ENCODE measurements at regions of chr10 and their contacts with region 1.

Region 1: GRCh38 chr10:13707156-13707881 is 120.6 kb downstream of the PRPF18 start:
- DNase-seq: peak; percentile 51 to 63
- H3K4me3 ChIP-seq: peak overlapping the region; percentile 59
- H3K27ac ChIP-seq: peak overlapping the region; percentile 67
- H3K4me1 ChIP-seq: peaks cover 38% of the 10 kb centered on the region
- H3K27me3 ChIP-seq: no peaks in the 10 kb centered on the region
- CTCF ChIP-seq: no peak

Region 2: DNA sequence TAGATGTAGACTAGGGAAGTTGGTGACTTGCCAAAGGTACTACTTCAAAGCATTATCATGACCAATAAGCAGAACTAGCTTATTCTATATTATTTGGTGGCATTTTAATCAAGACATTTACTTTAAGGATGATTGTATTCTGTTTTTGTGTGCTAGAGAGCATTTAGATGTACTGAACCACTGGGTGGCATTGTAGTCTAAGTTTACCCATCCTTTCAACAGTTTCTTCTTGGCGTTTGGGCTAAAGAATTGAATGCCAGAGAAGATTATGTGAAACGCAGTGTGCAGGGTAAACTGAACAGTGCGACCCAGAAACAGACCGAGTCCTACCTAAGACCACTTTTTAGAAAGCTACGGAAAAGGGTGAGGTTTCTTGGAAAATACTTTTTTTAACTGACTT is 93.8 kb before region 1 on chr10:
- CTCF ChIA-PET with region 1: no interaction called
- POLR2A ChIA-PET with region 1: no interaction called
- intact Hi-C with region 1: loop called (anchors 10 kb)
- DNase-seq: no peak
- H3K4me3 ChIP-seq: no peak overlapping the region
- H3K27ac ChIP-seq: no peak overlapping the region
- H3K4me1 ChIP-seq: peaks cover 17% of the 10 kb centered on the region
- H3K27me3 ChIP-seq: no peaks in the 10 kb centered on the region
- CTCF ChIP-seq: peak; percentile 64

Region 3: DNA sequence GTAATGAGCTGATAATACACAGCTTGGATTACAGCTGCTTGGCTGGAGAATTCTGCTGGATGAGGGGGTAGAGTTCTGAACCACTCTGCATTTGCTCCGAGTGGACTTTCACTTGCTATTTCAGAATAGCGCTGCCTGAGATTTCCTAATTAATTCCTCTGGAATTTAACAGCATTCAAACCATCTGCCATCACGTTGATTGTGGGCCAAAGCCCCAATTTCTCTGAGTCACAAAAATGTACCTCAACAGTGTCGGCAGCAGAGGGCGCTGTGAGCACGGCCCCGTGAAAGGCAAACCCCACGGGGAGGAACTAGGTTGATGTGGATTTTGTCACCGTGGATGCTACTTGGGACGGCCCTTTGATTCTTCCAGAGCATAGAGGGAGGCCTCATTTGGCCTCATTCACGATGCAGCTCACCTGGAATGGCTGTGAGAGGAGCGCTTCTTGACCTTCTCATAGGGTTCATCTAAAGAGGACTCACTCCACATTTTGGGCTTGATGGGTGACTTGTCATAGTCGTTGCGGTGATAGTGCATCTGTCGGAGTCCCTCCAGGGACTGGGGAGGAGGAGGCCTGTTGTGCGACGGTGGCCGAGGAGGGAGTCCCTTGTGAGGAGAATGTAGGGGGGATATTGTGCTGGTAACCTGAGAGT is 47.3 kb before region 1 on chr10:
- CTCF ChIA-PET with region 1: no interaction called
- POLR2A ChIA-PET with region 1: no interaction called
- intact Hi-C with region 1: loop called (anchors 5 kb)
- DNase-seq: peak in 1 of 2 experiments; percentile 38
- H3K4me3 ChIP-seq: no peak overlapping the region
- H3K27ac ChIP-seq: no peak overlapping the region
- H3K4me1 ChIP-seq: no peaks in the 10 kb centered on the region
- H3K27me3 ChIP-seq: no peaks in the 10 kb centered on the region
- CTCF ChIP-seq: peak; percentile 91

Region 4: GRCh38 chr10:13690281-13690825 is 17.0 kb before region 1 on chr10:
- CTCF ChIA-PET with region 1: no interaction called
- POLR2A ChIA-PET with region 1: no interaction called
- intact Hi-C with region 1: loop called (anchors 2 kb)
- DNase-seq: peak; percentile 58 to 69
- H3K4me3 ChIP-seq: no peak overlapping the region
- H3K27ac ChIP-seq: no peak overlapping the region
- H3K4me1 ChIP-seq: peaks cover 16% of the 10 kb centered on the region
- H3K27me3 ChIP-seq: no peaks in the 10 kb centered on the region
- CTCF ChIP-seq: no peak

Region 5: DNA sequence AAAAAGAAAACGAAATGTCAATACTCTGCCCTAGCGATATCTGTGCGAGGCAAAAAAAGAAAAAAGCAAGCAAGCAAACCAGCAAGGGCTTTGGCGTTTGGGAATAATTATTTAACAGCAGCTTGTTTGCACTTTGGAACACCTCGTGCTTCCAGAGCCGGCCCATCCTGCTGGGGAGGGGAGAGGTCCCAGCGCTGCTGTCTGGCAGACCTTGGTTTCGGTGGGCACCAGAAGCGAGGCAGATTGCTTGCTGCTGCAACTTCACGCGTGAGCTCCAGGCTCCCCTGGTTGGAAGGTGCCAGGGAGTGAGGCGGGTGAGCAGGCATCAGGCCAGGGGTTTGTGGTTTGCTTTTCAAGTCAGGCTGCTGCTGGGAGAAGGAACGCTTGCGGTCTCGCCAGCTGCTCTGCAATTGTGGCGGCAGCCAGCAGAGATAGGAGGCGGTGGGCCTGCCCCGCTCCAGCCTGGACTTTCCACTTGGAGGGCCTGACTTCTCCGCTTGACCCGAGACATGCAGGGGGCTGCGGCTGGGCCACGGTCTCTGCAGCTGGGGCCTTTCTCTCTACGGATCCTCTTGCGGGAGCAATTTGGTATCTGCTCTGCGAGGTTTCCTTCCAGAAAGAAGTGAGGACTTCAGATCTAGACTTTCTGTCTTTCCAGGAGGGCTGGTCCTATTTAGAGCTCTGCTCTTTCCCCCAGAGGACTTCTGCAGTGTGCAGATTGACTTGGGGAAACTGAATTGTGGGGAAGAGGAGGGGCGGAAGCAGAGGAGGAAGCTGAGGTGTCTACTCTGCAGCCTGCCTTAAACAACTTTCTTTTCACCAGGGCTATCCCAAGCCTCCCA is 10.8 kb after region 1 on chr10:
- CTCF ChIA-PET with region 1: interaction called, 3 read pairs
- POLR2A ChIA-PET with region 1: interaction called, 21 read pairs
- intact Hi-C with region 1: loop called (anchors 1 kb)
- DNase-seq: peak; percentile 69 to 83
- H3K4me3 ChIP-seq: peak overlapping the region; percentile 55
- H3K27ac ChIP-seq: peak overlapping the region; percentile 65
- H3K4me1 ChIP-seq: peaks cover 21% of the 10 kb centered on the region
- H3K27me3 ChIP-seq: no peaks in the 10 kb centered on the region
- CTCF ChIP-seq: no peak

Region 6: DNA sequence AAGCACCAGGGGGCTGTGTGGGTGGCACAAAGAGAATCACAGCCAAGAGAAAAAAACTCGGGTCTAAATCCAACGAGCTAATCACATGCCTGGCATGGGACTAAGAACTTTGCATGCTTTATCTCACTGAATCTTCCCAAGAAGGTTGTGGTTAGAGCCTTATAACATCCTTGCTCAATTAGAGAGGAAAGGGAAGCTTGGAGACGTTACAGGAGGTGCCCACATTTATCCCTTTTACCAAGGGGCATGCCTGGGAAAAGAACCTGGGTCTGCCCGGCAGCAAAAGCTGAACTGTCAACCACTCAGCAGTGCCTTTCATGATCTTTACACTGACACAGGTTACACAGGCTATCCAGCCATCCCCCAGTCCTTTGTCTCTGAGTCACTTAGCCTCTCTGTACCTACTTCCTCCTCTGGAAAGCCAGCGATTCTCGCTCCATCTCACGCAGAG is 69.6 kb after region 1 on chr10:
- CTCF ChIA-PET with region 1: no interaction called
- POLR2A ChIA-PET with region 1: no interaction called
- intact Hi-C with region 1: loop called (anchors 5 kb)
- DNase-seq: peak; percentile 20 to 71
- H3K4me3 ChIP-seq: no peak overlapping the region
- H3K27ac ChIP-seq: peak overlapping the region; percentile 16; the same call in 1 of the 2 replicates
- H3K4me1 ChIP-seq: peaks cover 33% of the 10 kb centered on the region
- H3K27me3 ChIP-seq: no peaks in the 10 kb centered on the region
- CTCF ChIP-seq: no peak